PC-9 (cell line): ENCODE measurements at regions of chr20 and their contacts with region 1.

Region 1: DNA sequence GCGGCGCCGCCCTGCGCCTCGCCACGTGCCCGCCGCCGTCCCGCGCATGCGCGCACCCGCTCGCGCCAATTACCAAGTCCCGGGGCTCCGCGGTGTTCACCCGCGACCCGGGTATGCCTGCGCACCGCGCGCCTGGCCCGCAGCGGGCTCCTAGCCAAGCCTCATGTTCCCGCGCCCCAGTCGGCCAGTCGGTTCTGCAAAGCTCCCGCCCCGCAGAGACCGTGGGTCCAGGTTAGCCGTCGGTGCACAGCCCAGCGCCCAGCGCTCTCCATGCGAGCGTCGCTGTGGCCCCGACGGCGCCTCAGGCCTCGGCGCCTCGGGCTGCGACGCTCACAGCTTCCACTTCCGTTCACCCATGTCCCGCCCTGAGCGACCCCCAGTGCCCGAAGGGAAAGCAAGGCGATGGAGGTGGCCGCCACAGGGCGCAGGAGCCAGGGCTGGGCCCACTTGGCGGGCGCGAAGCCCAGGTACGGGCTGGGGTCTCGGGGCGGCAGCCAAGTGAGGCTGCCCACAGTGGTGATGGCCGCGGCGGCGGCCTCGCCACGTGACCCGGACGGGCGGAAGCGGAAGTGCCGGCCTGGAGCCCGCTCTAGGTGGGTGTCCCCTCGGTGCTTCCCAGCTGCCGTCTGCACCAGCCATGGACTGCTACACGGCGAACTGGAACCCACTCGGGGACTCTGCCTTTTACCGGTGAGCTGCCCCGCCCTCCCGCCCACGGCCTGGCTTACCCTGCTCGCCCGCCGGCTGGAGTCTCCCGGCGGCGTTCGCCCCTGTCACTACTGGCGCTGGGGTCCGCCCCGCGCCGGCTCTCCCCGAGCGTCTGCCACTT is at the starts of genes PCED1A and VPS16:
- DNase-seq: peak; percentile 67 to 86
- H3K4me3 ChIP-seq: peak within 1 kb of the TSS; percentile 100
- H3K27ac ChIP-seq: peak within 1 kb of the TSS; percentile 51; the same call in 1 of the 2 replicates
- H3K4me1 ChIP-seq: peaks cover 14% of the 10 kb centered on the region
- H3K27me3 ChIP-seq: no peaks in the 10 kb centered on the region
- CTCF ChIP-seq: no peak
- total RNA-seq, gene PCED1A: 47.9 and 60.1 TPM in 2 replicates
- total RNA-seq, gene VPS16: 21.5 and 31.9 TPM in 2 replicates

Region 2: DNA sequence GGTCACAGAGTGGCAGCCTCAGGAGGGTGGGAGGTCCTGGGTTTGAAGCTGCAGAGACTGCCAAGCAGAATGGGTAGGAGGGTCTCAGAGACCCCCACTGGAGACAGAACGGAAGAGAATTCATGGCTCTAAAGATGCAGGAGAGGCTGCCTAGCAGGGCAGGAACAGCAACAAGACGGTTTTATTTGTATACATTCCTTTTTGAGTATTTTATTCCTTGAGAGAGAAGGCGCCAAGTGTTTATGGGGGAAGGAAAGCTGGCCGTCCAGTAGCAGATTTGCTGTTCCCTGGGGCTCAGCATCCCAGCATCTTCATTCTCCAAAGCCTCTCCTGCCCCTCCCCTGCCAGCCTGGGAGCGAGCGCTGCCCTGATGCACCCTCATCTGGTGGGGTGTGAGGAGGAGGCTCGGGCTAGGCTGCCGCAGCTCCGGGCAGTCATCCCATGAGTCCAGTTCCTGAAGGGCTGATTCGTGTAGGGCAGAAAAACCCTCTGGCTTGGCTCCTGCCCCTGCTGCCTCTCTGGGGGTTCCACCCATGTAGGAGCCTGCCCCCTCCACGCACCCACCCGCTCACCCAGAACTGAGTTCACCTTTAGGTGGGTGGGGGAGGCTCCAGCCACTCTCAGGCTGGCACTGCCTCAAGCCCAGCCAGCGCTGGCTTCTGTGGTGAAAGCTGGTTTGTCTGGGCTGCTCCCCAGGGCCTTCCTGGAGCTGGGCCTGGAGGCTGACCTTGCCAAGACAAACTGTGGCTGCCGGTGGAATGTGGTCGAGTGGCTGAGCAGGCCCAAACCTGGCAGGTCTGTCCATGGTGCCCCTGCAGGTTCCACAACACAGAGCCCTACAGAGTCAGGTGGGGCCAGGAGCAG is 72.4 kb before region 1 on chr20:
- CTCF ChIA-PET with region 1: no interaction called
- POLR2A ChIA-PET with region 1: no interaction called
- intact Hi-C with region 1: loop called (anchors 2 kb)
- DNase-seq: peak; percentile 85 to 94
- H3K4me3 ChIP-seq: no peak overlapping the region
- H3K27ac ChIP-seq: no peak overlapping the region
- H3K4me1 ChIP-seq: peaks cover 8% of the 10 kb centered on the region
- H3K27me3 ChIP-seq: no peaks in the 10 kb centered on the region
- CTCF ChIP-seq: no peak